ENCODE measurements at regions of chr15 and their contacts with region 1.

Region 1: GRCh38 chr15:80660122-80660521 is 35.0 kb upstream of the ABHD17C start:
- DNase-seq: peak in 5 of 7 donors; percentile 21 to 66 (median 29)
- H3K4me3 ChIP-seq: no peak overlapping the region
- H3K27ac ChIP-seq: no peak overlapping the region
- H3K4me1 ChIP-seq: no peaks in the 10 kb centered on the region
- H3K27me3 ChIP-seq: no peaks in the 10 kb centered on the region
- CTCF ChIP-seq: peak; percentile 6 to 64 (median 42)
- POLR2A ChIP-seq: no peak

Region 2: DNA sequence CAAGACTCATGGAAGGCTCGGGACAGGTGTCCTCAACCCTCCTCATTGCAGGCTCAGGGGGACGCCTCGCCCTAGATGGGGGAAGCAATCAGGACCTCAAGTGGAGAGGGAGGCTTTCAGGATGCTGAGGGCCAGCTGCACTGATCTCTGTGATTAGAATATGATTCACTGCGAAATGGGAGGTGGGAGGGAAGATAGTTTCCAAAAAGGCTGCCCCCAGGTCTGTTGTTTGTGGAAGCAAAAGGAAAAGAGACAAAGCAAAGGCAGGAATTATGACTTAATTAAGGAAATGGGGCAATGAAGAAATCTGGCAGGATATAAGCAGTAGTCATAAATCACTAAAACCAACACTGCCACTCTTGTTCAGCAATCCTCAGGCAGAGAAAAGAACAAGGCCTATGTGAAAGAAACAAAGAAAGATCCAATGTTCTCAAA is 50.6 kb before region 1 on chr15:
- intact Hi-C with region 1: no loop called
- DNase-seq: no peak
- H3K4me3 ChIP-seq: no peak overlapping the region
- H3K27ac ChIP-seq: no peak overlapping the region
- H3K4me1 ChIP-seq: peaks cover 0 to 8% of the 10 kb centered on the region in 2 donors
- H3K27me3 ChIP-seq: no peaks in the 10 kb centered on the region
- CTCF ChIP-seq: no peak
- POLR2A ChIP-seq: no peak

Region 3: DNA sequence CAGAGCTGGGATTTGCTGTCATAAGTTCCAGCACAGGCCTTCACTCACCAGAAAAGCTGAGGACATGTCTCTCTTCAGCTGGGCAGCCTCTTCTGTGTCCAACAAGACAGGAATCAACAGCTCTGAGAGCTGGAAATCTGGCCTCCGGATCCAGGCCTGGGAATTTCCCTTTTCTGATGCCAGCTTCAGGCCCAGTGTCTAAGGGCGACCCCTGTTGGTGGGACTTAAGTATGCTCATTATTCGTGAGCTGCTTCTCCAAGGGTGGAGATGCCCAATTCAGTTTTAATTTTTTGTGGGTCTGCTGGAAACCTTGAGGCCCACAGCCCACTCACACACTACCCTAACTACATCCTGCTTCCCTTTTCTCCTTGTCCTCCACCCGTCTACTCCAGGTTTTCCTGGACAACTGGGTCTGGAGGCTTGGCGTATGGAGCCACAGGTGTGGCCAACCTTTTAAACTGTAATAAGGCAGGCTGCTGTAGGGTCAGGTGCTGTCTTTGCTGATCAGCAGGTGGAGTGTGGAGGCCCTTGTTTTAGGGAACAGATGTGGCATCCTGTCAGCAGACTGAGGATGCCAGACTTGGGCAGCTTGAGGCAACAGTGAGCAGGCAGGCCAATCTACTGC is 116.4 kb after region 1 on chr15:
- intact Hi-C with region 1: loop called in 1 of 2 experiments (anchors 5 kb)
- DNase-seq: peak; percentile 73 to 90 (median 77)
- H3K4me3 ChIP-seq: no peak overlapping the region
- H3K27ac ChIP-seq: no peak overlapping the region
- H3K4me1 ChIP-seq: peaks cover 5 to 20% of the 10 kb centered on the region in 2 donors
- H3K27me3 ChIP-seq: peaks cover 21% of the 10 kb centered on the region
- CTCF ChIP-seq: peak; percentile 74 to 85 (median 80)
- POLR2A ChIP-seq: no peak

Region 4: GRCh38 chr15:80875568-80876347 is 215.6 kb after region 1 on chr15:
- intact Hi-C with region 1: no loop called
- DNase-seq: peak in 1 of 7 donors; percentile 21
- H3K4me3 ChIP-seq: no peak overlapping the region
- H3K27ac ChIP-seq: no peak overlapping the region
- H3K4me1 ChIP-seq: no peaks in the 10 kb centered on the region
- H3K27me3 ChIP-seq: no peaks in the 10 kb centered on the region
- CTCF ChIP-seq: no peak
- POLR2A ChIP-seq: no peak

Measured in adrenal gland (tissue), 19 donors.